ENCODE measurements at regions of chr11 and their contacts with region 1.

Region 1: GRCh38 chr11:125333354-125334073 is 162.6 kb downstream of the FEZ1 start:
- DNase-seq: no peak
- H3K4me3 ChIP-seq: no peak overlapping the region
- H3K27ac ChIP-seq: no peak overlapping the region
- H3K4me1 ChIP-seq: no peaks in the 10 kb centered on the region
- H3K27me3 ChIP-seq: no peaks in the 10 kb centered on the region
- CTCF ChIP-seq: no peak
- POLR2A ChIP-seq: no peak

Region 2: GRCh38 chr11:125369808-125370207 is 36.3 kb after region 1 on chr11:
- intact Hi-C with region 1: loop called (anchors 1 kb)
- DNase-seq: no peak
- H3K4me3 ChIP-seq: no peak overlapping the region
- H3K27ac ChIP-seq: no peak overlapping the region
- H3K4me1 ChIP-seq: no peaks in the 10 kb centered on the region
- H3K27me3 ChIP-seq: no peaks in the 10 kb centered on the region
- CTCF ChIP-seq: no peak
- POLR2A ChIP-seq: no peak

Measured in breast epithelium (tissue), 4 donors.